ENCODE measurements at regions of chr14 and their contacts with region 1.

Region 1: DNA sequence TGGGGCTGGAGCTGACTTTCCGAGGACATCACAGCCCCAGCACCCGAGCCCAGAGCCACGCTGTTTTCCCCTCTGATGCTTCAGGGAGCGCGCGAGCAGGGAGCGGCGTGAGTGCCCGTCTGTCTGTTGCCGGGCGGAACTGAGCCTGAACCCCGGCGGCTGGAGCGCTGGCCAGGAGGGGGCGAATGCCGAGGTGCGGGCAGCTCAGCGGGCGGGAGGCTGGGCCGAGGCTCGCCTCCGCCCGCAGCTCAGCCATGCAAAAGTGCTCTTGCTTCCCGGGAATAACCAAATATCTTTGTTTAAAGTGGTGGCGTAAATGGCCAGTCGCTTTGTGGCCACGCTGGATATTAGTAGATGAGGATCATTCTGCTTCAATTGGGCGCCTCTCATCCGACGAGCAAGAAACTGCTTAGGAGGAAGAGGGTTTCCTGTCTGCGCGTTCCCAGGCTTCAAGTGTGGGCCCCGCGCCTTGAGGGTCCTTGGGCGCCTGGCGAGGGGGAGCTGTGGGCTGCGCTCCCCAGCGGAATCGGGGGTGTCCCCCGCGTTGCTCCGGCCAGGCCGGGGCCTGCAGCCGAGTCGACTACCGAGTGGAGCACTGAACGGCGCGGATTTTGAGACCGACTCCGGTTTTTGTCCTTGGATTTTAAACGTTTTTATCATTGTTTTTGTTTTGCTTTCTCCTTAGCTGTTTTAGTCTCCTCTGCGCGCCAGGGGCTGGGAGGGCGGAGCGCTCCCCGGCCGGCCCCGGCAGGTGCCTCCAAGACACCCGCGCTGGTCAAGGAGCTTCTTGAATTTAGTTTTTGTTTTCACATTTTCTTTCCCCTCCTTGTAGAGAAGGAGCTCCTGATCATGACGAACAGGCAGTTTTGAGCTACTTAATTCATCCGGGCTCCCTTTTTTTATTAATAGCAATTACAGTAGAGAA is 831 bp upstream of the NKX2-1 start:
- DNase-seq: no peak
- H3K4me3 Mint-ChIP-seq: no peak overlapping the region
- H3K27ac Mint-ChIP-seq: no peak overlapping the region
- H3K4me1 Mint-ChIP-seq: peaks cover 23% of the 10 kb centered on the region
- H3K27me3 Mint-ChIP-seq: peaks cover 71% of the 10 kb centered on the region

Region 2: GRCh38 chr14:36505181-36505815 is 15.6 kb before region 1 on chr14:
- CTCF ChIA-PET with region 1: interaction called, 5 read pairs
- intact Hi-C with region 1: loop called (anchors 2 kb)
- DNase-seq: no peak
- H3K4me3 Mint-ChIP-seq: peak overlapping the region; percentile 11
- H3K27ac Mint-ChIP-seq: no peak overlapping the region
- H3K4me1 Mint-ChIP-seq: peaks cover 26% of the 10 kb centered on the region
- H3K27me3 Mint-ChIP-seq: peaks cover 71% of the 10 kb centered on the region

Region 3: GRCh38 chr14:36538051-36538450 is 17.2 kb after region 1 on chr14:
- CTCF ChIA-PET with region 1: interaction called, 11 read pairs
- intact Hi-C with region 1: no loop called
- DNase-seq: no peak
- H3K4me3 Mint-ChIP-seq: no peak overlapping the region
- H3K27ac Mint-ChIP-seq: no peak overlapping the region
- H3K4me1 Mint-ChIP-seq: no peaks in the 10 kb centered on the region
- H3K27me3 Mint-ChIP-seq: peaks cover 26% of the 10 kb centered on the region

Region 4: DNA sequence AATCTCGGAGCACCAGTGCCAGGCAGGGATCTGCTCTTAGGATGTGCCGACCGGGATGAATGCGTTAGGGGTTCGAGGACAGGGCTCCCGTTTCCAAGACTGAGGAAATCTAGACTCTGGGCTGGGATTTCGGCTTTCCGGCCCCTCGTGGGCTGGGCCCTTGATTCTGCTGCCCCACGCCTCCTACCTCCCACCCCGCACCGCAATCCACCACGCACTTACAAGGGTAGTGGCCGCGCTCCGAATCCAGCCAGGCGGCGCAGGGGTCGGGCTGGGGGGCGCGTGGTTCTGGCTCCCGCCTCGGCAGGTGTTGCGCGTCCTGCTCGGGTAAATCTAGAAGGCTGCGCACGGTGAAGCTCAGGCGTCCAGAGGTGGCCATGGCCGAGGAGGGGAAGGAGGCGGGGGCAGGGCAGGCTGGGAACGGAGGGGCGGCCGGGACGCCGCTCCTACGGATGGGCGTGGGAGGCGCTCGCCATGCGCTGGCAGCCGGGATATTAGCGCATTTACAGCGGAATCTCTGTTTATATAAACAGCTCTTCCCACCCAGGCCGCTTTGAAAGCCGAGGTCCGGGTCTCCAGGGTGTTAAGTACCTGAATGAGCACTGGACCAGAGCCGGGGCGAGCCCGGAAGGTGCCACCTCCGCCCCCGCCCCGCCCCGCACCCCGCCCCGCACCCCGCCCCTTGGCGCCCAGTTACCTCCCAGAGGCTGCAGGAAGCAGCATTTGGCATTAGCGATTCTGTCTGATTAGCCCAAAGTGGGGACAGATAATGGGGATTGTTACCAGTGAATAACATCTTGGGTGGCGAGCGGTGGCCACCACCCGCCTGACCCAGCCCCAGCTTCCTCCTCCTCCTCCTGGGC is 61.4 kb after region 1 on chr14 and contains the start of gene NKX2-8:
- CTCF ChIA-PET with region 1: no interaction called
- intact Hi-C with region 1: loop called (anchors 2 kb)
- DNase-seq: no peak
- H3K4me3 Mint-ChIP-seq: no peak within 1 kb of the TSS
- H3K27ac Mint-ChIP-seq: no peak within 1 kb of the TSS
- H3K4me1 Mint-ChIP-seq: peaks cover 2% of the 10 kb centered on the region
- H3K27me3 Mint-ChIP-seq: peaks cover 76% of the 10 kb centered on the region
- total RNA-seq, gene NKX2-8: not detected

Region 5: GRCh38 chr14:37153483-37153882 is 632.6 kb after region 1 on chr14:
- CTCF ChIA-PET with region 1: no interaction called
- intact Hi-C with region 1: no loop called
- DNase-seq: no peak
- H3K4me3 Mint-ChIP-seq: no peak overlapping the region
- H3K27ac Mint-ChIP-seq: no peak overlapping the region
- H3K4me1 Mint-ChIP-seq: no peaks in the 10 kb centered on the region
- H3K27me3 Mint-ChIP-seq: peaks cover 1% of the 10 kb centered on the region

Measured in activated naive CD4-positive, alpha-beta T cell treated with anti-CD3 and anti-CD28 coated beads for 36 hours (primary cell).